ENCODE measurements at regions of chr6 and their contacts with region 1.

Region 1: GRCh38 chr6:116253505-116254296 is at the start of gene TSPYL4:
- DNase-seq: peak; percentile 98
- H3K4me3 Mint-ChIP-seq: no peak within 1 kb of the TSS
- H3K27ac Mint-ChIP-seq: no peak within 1 kb of the TSS
- H3K4me1 Mint-ChIP-seq: peaks cover 25% of the 10 kb centered on the region
- H3K27me3 Mint-ChIP-seq: no peaks in the 10 kb centered on the region
- total RNA-seq, gene TSPYL4: 22.1 and 22.2 TPM in 2 replicates

Region 2: DNA sequence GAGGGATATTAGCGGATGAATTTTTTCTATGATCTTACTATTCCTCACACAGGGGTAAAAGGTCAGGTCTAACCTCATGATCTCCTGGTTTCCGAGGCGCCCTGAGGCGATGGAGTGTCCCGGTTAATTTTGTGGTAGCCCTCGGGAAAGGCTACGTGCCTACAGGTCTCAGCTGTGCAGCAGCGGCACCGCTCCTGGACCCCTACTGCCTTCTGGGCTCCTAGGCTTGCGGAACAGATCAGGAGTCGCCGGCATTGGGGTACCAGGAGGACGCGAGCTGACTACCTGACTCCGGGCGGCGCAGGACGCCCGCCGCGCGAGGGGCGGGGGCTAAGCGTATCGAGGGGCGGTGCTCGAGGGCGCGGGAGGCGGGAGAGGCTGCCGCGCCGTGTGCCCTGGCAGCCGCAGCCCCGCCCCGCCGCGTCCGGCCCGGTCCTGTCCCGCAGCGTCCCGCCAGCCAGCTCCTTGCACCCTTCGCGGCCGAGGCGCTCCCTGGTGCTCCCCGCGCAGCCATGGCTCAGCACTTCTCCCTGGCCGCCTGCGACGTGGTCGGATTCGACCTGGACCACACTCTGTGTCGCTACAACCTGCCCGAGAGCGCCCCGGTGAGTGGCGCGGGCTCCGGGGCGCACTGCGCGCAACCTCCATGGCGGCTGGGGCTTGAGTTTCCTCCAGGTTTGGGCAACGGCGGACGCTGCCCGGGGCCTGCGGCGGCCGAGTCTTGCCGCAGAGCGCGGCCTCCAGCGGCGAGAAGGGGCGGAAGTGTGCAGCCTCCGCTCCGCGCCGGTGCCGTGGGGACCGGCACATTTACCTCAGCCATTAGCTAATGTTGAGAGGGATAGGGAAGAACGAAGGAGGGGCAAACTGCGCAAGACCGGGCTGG is 153.0 kb before region 1 on chr6 and contains the start of gene NT5DC1:
- intact Hi-C with region 1: loop called (anchors 2 kb)
- DNase-seq: peak; percentile 96
- H3K4me3 Mint-ChIP-seq: peak within 1 kb of the TSS; percentile 95
- H3K27ac Mint-ChIP-seq: peak within 1 kb of the TSS; percentile 92
- H3K4me1 Mint-ChIP-seq: peaks cover 38% of the 10 kb centered on the region
- H3K27me3 Mint-ChIP-seq: no peaks in the 10 kb centered on the region
- total RNA-seq, gene NT5DC1: 38.1 and 38.9 TPM in 2 replicates

Region 3: GRCh38 chr6:116229287-116229913 is 24.3 kb before region 1 on chr6:
- intact Hi-C with region 1: no loop called
- DNase-seq: peak; percentile 73
- H3K4me3 Mint-ChIP-seq: no peak overlapping the region
- H3K27ac Mint-ChIP-seq: no peak overlapping the region
- H3K4me1 Mint-ChIP-seq: no peaks in the 10 kb centered on the region
- H3K27me3 Mint-ChIP-seq: no peaks in the 10 kb centered on the region

Region 4: DNA sequence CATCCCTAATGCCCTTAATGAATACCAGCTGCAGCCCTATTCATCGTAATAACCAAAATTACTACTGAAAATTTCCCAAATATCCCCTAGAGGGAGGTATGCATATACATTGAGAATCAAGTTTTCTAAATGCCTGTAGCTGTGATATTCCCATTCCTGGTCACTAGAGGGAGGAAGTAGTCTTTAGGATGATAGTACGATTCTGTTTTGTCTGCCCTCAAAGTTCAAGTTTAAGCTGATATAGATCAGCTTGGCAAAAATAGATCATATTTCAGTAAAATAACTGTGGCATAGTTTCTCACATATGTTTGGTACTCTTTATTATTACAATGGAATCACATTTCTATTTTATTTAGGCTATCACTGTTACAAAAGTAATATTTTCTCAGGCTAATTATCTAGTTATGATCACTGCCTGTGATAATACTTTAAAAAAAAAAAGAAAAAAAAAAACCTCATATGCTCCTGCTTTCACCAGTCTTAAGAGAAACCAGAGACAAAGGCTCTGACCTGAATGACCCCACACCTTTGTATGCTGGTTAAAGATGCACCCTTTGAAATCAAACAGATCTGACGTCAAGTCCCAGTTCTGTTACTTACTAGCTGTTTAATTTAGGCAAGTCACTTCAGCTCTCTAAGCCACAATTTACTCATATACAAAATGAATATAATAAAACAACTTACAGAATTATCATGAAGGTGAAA is 15.0 kb after region 1 on chr6:
- intact Hi-C with region 1: loop called (anchors 2 kb)
- DNase-seq: no peak
- H3K4me3 Mint-ChIP-seq: no peak overlapping the region
- H3K27ac Mint-ChIP-seq: no peak overlapping the region
- H3K4me1 Mint-ChIP-seq: peaks cover 8% of the 10 kb centered on the region
- H3K27me3 Mint-ChIP-seq: no peaks in the 10 kb centered on the region